ENCODE measurements at regions of chrX and their contacts with region 1.

Region 1: DNA sequence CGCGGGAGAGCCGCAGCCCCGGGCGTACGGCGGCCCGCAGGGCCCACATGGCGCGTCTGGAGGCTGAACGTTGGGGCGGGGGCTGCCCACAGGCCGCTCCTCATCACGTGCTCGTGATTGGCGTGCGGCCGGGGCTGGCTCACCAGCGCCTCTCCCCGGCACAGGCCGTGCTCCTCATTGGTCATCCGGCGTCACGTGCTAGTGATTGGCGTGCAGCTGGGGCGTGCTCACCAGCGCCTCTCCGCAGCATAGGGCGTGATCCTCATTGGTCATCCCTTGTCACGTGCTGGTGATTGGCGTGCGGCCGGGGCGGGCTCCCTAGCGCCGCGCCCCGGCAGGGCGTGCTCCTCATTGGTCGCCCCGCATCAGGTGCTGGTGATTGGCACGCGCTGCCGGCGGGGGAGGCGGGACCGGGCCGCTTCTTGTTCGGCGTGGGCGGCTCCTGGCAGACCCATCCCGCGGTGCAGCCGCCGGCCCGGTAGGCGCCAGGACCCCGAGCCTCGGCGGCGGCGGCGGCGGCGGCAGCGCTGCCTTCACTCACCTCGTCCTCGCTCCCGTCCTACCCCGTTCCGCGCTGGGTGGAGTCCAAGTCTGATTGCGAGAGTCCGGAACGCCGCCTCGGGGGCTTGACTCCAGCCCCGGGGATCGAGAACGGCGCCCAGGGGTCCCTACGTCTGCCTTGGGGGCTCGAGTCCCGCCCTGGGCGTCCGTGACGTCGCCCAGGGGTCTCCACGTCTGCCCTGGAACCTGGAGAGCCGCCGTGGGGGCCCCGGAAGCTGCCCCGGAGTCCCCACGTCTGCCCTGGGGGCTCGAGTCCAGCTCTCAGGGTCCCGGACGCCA is at the start of gene GTPBP6:
- DNase-seq: peak; percentile 100
- ATAC-seq: peak; percentile 90 to 94 (median 92)
- H3K4me3 ChIP-seq: peak within 1 kb of the TSS; percentile 74 to 99 (median 96)
- H3K27ac ChIP-seq: peak within 1 kb of the TSS; percentile 89 to 98 (median 94)
- H3K4me1 ChIP-seq: peaks cover 0 to 24% (median 13%) of the 10 kb centered on the region in 12 donors
- H3K27me3 ChIP-seq: peaks cover 0 to 1% (median 0%) of the 10 kb centered on the region in 9 donors
- CTCF ChIP-seq: peak in 6 of 12 donors; percentile 0 to 46 (median 36)
- POLR2A ChIP-seq: peak; percentile 49 to 94
- total RNA-seq, gene GTPBP6: 31.3 to 71.5 (median 47.5) TPM

Region 2: GRCh38 chrX:275967-276580 is 42.9 kb before region 1 on chrX:
- intact Hi-C with region 1: loop called in 3 of 10 experiments (anchors 5 kb)
- DNase-seq: peak; percentile 81 to 92 (median 82)
- ATAC-seq: peak; percentile 94 to 98 (median 98)
- H3K4me3 ChIP-seq: peak overlapping the region; percentile 30 to 82 (median 58)
- H3K27ac ChIP-seq: peak overlapping the region in 7 of 12 donors; percentile 17 to 66 (median 38)
- H3K4me1 ChIP-seq: peaks cover 2 to 21% (median 14%) of the 10 kb centered on the region in 12 donors
- H3K27me3 ChIP-seq: peaks cover 0 to 4% (median 0%) of the 10 kb centered on the region in 9 donors
- CTCF ChIP-seq: peak in 4 of 12 donors; percentile 8 to 37 (median 10)
- POLR2A ChIP-seq: peak in 1 of 2 donors; percentile 48

Region 3: GRCh38 chrX:283115-283845 is 35.7 kb before region 1 on chrX:
- intact Hi-C with region 1: loop called in 4 of 10 experiments (anchors 1 to 5 kb)
- DNase-seq: peak; percentile 88 to 92 (median 91)
- ATAC-seq: peak; percentile 98 to 99 (median 99)
- H3K4me3 ChIP-seq: peak overlapping the region in 11 of 12 donors; percentile 33 to 88 (median 59)
- H3K27ac ChIP-seq: peak overlapping the region in 5 of 12 donors; percentile 37 to 64 (median 49)
- H3K4me1 ChIP-seq: peaks cover 0 to 13% (median 0%) of the 10 kb centered on the region in 12 donors
- H3K27me3 ChIP-seq: no peaks in the 10 kb centered on the region
- CTCF ChIP-seq: no peak
- POLR2A ChIP-seq: no peak

Region 4: DNA sequence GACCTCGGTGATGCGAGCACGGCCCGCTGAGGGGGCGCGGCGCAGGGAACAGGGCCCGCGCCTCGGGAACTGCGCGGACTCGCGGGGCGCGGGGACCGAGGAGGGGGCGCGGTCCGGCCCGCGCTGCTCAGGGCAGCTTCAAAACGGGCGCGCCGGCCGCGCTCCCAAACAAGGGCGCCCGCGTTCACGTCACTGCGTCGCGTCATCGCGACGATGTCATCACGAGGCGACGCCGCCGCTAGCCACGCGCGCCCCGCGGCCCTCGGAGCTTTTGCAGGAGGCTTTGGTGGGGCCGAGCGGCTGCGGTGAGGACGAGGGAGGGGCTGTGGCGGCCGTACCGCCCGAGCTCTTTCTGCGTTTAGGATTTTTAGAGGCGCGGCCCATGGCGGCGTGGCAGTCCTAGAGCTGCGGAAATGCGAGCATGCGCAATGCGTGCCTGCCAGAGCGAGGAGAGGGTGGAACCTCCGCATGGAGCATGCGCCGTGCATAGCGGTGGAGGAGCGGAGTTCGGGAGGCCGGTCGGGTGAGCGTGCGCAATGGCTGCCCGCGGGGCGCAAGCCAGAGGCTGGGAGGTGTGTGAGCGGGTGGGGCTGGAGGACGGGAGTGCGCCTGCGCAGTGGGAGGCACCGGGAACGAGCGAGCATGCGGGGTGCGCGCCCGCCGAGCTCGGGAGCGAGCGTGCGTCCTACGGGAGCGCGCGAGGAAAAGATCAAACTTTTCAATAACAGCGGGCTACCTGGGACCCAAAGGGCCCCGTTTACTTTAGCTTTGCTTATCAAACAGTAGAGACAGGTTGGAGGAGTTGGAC is 68.0 kb after region 1 on chrX and contains the start of gene PPP2R3B:
- intact Hi-C with region 1: loop called in 2 of 10 experiments (anchors 2 to 5 kb)
- DNase-seq: peak; percentile 99 to 100 (median 99)
- ATAC-seq: peak; percentile 100
- H3K4me3 ChIP-seq: peak within 1 kb of the TSS; percentile 38 to 97 (median 83)
- H3K27ac ChIP-seq: peak within 1 kb of the TSS; percentile 94 to 100 (median 98)
- H3K4me1 ChIP-seq: peaks cover 0 to 16% (median 9%) of the 10 kb centered on the region in 12 donors
- H3K27me3 ChIP-seq: no peaks in the 10 kb centered on the region
- CTCF ChIP-seq: no peak
- POLR2A ChIP-seq: peak in 1 of 2 donors; percentile 46
- total RNA-seq, gene PPP2R3B: 98.3 to 186 (median 113) TPM

Region 5: GRCh38 chrX:413322-414201 is 94.6 kb after region 1 on chrX:
- intact Hi-C with region 1: loop called in 1 of 10 experiments (anchors 2 kb)
- DNase-seq: peak; percentile 63 to 87 (median 73)
- ATAC-seq: peak; percentile 86 to 94 (median 91)
- H3K4me3 ChIP-seq: peak overlapping the region in 11 of 12 donors; percentile 15 to 52 (median 45)
- H3K27ac ChIP-seq: peak overlapping the region; percentile 32 to 93 (median 83)
- H3K4me1 ChIP-seq: peaks cover 0 to 16% (median 0%) of the 10 kb centered on the region in 12 donors
- H3K27me3 ChIP-seq: peaks cover 0 to 4% (median 0%) of the 10 kb centered on the region in 9 donors
- CTCF ChIP-seq: peak in 7 of 12 donors; percentile 11 to 48 (median 36)
- POLR2A ChIP-seq: no peak